Sciatic nerve (tissue), 2 donors: ENCODE measurements at regions of chr2 and their contacts with region 1.

Region 1: GRCh38 chr2:24084386-24085361 is at the start of gene TP53I3:
- DNase-seq: peak; percentile 93
- ATAC-seq: peak; percentile 96
- total RNA-seq, gene TP53I3: 25.3 TPM

Region 2: DNA sequence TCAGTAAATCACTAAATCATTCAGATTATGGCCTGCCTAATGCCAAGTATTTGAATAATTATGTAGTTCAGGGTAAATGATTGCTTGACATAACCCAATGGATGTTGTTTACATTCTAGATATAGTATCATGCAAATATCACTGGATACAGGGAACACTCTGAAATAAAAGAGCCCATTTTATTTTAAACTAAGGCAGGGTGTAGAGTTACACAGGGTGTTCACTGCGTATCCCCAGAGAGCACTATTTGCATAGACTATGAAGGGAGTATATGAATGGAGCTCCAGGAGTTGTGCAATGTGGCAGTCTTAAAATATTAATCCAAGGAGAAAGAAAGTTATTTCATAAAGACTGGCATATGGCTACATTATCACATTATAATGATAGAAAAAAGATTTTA is 1400.8 kb before region 1 on chr2:
- intact Hi-C with region 1: no loop called
- DNase-seq: no peak
- ATAC-seq: no peak

Region 3: GRCh38 chr2:23926750-23927571 is 157.7 kb before region 1 on chr2 and contains the start of gene ATAD2B:
- intact Hi-C with region 1: loop called (anchors 2 kb)
- DNase-seq: peak; percentile 94
- ATAC-seq: peak; percentile 95
- total RNA-seq, gene ATAD2B: 42.2 TPM

Region 4: DNA sequence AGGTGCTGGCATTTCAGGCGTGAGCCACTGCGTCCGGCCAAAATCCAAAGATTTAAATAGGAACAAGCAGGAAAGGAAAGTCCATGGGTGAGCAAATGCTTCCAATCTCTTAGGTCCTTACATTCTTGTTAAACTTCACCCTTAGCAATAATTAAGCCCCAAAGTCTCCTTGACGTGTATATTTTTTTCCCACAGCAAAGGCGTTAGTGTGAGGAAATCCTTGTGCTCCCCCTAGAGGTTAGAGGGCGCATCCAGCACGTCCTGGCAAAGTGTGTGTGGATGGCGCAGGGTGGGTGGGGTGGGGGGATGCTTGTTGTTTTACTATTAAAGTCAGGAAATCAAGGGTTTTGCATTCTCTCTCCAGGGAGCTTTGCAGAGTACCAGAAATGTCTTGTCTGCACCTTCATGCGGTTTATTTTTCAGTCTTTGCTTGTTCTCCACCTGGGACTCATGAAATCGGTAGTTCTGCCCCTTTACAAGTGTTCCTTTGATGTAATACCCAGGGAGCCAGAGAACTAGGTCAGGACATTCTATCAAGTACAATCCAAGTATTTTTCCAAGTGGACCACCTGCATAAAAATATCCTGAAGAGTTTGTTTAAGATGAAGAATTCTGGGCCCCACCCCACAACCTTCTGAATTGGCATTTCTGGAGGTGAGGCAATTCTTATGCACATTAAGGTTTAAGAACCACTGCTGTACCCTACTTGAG is 297.8 kb after region 1 on chr2:
- intact Hi-C with region 1: loop called (anchors 10 kb)
- DNase-seq: peak; percentile 74
- ATAC-seq: peak; percentile 94